ENCODE measurements at regions of chr17 and their contacts with region 1.

Region 1: DNA sequence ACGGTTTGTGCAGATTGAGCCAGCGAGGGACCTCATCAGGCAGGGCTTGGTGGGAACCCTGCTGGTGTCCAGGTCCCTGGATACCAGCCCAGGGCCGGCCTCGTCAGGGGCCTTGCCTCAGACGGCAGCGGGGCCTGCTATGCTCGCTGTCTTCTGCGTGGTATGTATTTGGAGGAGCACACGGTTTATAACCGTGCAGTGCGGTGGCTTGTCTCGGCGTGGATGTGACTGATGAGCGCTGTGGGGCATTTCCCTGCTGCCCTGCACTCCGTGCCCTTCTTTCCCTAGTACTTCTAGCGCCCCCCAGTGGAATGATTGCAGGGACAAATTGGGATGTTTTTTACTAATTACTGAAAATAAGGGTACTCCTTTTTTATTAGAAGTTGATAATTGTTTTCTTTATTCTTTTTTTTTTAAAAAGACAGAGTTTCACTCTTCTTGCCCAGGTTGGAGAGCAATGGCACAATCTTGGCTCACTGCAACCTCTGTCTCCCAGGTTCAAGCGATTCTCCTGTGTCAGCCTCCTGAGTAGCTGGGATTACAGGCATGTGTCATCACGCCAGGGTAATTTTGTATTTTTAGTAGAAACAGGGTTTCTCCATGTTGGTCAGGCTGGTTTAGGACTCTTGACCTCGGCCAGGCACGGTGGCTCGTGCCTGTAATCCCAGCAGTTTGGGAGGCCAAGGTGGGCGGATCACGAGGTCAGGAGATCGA is 15.3 kb downstream of the TBCD start:
- DNase-seq: peak; percentile 26 to 94 (median 78)

Region 2: GRCh38 chr17:82668631-82669099 is 98.5 kb before region 1 on chr17:
- intact Hi-C with region 1: loop called (anchors 5 kb)
- DNase-seq: peak; percentile 72 to 91 (median 82)

Region 3: GRCh38 chr17:82716203-82717010 is 50.8 kb before region 1 on chr17 and contains the start of gene FN3KRP:
- intact Hi-C with region 1: loop called (anchors 10 kb)
- DNase-seq: peak; percentile 78 to 99 (median 94)

Region 4: DNA sequence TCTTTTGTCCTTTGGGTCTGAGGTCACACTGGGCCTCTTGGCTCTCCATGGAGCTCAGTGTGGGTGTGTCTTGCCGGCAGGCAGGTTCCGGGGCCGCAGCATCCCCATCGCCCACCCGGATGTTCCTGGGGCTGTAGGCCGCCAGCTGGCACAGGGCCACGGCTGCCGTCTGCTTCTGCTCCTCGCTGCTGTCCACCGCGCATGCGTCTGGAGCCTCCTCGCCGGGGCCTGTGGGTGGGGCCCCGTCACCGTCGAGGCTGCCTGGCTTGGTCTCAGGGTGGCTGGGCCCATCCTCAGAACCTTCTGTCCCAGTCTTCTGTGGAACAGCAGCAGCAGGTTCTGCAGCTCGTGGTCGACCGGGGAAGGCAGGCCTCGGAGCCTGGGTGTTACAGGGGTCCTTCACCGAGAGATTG is 63.1 kb after region 1 on chr17:
- intact Hi-C with region 1: no loop called
- DNase-seq: peak in 25 of 42 donors; percentile 17 to 65 (median 36)

Measured in head of caudate nucleus (tissue), 42 donors.